Calu3 (cell line): ENCODE measurements at regions of chr11 and their contacts with region 1.

Region 1: DNA sequence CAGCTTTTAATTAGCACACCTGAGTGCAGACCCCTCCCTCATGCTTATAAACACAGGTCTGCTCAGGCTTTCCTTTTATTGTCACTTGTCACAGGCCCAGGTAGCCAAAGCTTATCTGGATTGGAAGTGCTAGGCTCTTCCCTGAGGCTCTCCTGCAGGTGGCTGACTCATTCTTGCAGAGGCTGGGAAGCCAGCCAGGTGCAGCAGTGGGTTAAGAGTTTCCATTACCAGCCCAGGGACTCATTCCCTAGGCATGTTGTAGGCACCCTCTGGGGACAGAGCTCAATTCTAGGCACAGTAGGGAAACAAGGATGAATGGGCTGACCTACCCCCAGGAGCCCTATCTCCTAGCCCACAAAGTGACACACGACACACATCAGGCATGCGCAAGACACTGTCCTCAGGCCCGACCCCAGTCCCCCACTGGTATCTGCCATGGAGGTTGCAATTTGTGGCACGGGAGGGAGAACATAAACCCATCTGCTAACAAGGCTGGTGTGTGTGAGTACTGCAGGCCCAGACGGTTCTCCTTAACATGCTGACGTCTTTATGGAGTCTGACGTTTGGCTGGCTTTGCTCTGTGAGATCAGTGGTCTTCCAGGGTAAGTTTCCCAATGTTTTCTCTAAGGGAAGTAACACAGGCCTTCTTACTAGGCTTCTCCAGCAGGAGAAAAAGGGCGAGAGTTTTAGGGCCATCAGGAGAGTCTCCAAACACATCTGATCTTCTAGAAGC is 94.2 kb downstream of the ABTB2 start:
- DNase-seq: peak; percentile 89
- H3K4me3 Mint-ChIP-seq: peak overlapping the region; percentile 62
- H3K27ac Mint-ChIP-seq: peak overlapping the region; percentile 98
- H3K4me1 Mint-ChIP-seq: peaks cover 65% of the 10 kb centered on the region
- H3K27me3 Mint-ChIP-seq: no peaks in the 10 kb centered on the region
- CTCF ChIP-seq: no peak

Region 2: DNA sequence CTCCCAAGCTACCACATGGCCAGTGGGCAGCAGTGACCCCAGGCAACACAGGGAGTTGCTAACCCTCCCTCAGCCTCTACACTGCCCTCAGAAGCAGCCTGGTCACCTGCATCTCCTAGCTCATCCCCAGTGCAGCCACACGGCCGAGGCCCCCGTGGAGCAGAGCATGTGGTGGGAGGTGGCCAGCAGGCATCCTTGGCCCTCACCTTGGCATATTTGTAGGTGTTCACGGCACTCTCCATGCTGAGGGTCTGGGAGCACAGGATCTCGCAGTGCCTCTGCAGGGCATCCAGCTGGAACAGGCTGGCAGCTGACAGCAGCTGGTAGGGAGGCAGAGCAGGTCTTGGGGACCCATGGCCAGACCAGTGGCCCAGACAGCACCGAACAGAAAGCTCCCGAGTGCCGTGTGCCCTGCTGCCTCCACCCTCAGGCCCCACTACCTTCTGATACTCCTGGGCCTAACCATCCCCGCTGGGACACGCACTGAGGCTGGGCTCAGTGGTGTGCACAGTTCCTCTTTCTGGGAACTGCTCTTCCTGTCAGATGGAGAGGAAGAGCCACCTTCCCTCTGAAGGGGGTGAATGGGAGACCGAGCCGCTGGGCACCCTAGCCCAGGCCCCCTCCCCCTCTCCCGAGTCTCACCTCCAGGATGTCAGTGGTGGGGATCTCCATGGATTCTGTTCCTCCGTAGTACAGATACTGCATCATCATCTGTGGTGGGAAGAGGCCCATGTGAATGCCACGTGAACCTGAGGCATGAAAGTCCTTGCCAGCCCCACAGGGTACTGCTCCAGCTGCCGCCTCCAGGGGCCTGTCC is 109.3 kb before region 1 on chr11:
- CTCF ChIA-PET with region 1: no interaction called
- intact Hi-C with region 1: no loop called
- DNase-seq: no peak
- H3K4me3 Mint-ChIP-seq: no peak overlapping the region
- H3K27ac Mint-ChIP-seq: peak overlapping the region; percentile 38
- H3K4me1 Mint-ChIP-seq: no peaks in the 10 kb centered on the region
- H3K27me3 Mint-ChIP-seq: no peaks in the 10 kb centered on the region
- CTCF ChIP-seq: no peak

Region 3: DNA sequence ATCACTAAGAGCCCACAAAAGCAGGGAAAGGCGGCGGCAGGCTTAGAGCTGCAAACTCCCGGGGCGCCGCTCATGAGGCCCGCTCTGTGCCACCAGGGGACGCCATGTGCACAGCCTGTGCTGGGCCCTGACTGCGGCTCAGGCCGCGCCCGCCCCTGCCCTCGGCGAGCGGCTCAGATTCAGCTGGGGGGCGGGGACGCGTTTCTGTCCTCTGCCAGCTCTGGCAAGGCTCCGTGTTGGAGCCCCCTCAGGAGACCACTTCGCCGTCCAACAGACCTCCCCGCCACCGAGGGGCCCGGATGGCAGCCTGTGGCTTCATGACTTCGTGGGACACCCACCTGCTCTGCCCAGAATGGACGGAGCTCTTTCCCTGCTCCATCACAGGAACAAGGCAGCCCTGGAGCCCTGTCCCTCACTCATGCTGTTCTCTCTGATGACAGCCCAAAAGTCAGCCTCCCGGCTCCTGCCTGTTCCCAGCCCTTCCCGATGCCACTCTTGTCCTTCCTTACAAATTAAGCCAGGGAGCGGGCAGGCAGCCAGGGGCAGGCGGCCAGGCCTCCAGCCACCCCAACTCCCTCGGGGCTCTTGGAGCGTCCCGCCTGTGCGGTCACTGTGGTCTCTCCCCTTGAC is 89.1 kb before region 1 on chr11:
- CTCF ChIA-PET with region 1: interaction called, 16 read pairs
- intact Hi-C with region 1: loop called (anchors 5 kb)
- DNase-seq: peak; percentile 91
- H3K4me3 Mint-ChIP-seq: peak overlapping the region; percentile 69
- H3K27ac Mint-ChIP-seq: peak overlapping the region; percentile 45
- H3K4me1 Mint-ChIP-seq: peaks cover 18% of the 10 kb centered on the region
- H3K27me3 Mint-ChIP-seq: no peaks in the 10 kb centered on the region
- CTCF ChIP-seq: peak; percentile 95

Region 4: DNA sequence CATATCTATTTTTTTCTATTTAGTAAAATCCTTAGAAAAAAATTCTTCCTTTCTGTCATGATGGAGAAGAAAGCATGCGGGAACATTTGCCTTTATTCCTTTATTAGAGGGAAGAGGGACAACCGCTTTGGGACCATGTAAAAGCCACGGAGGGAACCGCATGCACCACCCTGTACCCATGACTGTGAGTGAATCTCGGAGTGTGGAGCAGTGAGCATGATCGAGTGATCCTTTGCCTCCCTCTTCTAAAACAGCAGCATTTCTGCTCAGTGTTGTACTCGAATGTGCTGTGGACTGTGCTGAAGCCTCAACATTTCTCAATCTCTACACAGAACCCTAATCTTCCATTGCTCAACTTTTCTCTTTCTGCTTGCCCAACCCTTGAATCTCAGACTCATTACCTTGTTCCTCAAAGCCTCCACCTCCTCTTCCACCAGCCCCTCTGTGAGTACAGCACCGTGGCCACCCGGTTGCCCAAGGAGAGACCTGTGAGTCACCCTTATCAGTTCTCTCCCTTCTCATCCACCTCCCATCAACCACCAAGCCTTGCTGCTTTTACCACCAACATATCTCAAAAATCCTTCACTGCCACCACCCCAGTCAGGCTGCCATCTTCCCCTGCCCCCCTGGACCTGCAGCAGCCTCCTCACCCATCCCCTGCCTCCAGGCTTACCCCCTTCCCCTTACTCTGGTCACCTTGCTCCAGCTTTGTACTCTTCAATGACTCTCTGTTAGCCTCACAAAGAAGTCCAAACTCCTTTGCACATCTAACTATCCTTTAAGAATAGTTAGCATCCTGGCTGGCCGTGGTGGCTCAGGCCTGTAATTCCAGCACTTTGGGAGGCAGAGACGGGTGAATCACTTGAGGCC is 55.1 kb before region 1 on chr11:
- CTCF ChIA-PET with region 1: interaction called, 4 read pairs
- intact Hi-C with region 1: loop called (anchors 2 kb)
- DNase-seq: peak; percentile 59
- H3K4me3 Mint-ChIP-seq: peak overlapping the region; percentile 1
- H3K27ac Mint-ChIP-seq: peak overlapping the region; percentile 16
- H3K4me1 Mint-ChIP-seq: peaks cover 50% of the 10 kb centered on the region
- H3K27me3 Mint-ChIP-seq: no peaks in the 10 kb centered on the region
- CTCF ChIP-seq: no peak

Region 5: GRCh38 chr11:34234086-34234740 is 29.4 kb before region 1 on chr11:
- CTCF ChIA-PET with region 1: interaction called, 12 read pairs
- intact Hi-C with region 1: loop called (anchors 1 kb)
- DNase-seq: peak; percentile 81
- H3K4me3 Mint-ChIP-seq: peak overlapping the region; percentile 14
- H3K27ac Mint-ChIP-seq: peak overlapping the region; percentile 73
- H3K4me1 Mint-ChIP-seq: peaks cover 30% of the 10 kb centered on the region
- H3K27me3 Mint-ChIP-seq: no peaks in the 10 kb centered on the region
- CTCF ChIP-seq: no peak

Region 6: DNA sequence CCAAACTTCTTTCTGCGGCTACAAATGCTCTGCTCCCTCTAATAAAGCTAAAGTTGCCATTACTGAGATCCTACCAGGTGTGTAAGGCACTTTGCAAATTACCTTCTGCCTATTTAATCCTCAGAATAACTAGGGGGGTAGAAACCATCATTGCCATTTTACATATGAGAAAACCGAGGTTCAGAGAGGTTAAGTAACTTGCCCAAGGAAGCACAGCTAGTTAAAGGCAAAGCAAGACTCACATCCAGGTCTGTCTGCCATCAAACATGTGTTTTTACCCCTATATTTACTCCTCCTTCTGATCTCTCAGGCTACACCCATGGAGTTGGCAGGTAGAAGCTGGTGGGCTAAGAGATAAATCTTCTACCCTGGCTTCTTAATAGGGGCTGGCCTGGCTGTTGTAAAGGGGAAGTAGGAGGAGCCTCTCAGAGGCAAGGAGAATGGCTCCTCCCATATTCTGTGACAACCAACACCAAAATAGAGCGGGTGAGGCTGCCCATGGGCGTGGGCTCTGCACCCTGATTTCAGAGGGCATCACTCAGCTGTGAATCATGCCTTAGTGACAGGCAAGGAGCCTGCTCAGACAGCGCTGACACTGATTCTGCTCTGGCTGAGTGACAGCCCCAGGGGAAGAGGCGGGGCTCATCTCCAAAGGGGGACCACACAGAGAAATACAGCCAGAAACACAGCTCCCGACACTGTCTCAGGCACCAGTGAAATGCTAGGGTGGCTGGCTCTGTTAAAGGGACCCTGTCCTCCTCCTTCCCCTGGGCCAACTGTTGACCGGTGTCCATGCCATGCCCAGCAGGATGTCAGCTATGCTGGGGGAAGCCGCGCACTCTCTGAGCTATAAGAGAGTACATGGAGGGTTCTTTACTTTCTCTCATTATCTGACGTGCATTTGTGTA is 12.6 kb before region 1 on chr11:
- CTCF ChIA-PET with region 1: interaction called, 12 read pairs
- intact Hi-C with region 1: no loop called
- DNase-seq: peak; percentile 62
- H3K4me3 Mint-ChIP-seq: no peak overlapping the region
- H3K27ac Mint-ChIP-seq: no peak overlapping the region
- H3K4me1 Mint-ChIP-seq: peaks cover 25% of the 10 kb centered on the region
- H3K27me3 Mint-ChIP-seq: no peaks in the 10 kb centered on the region
- CTCF ChIP-seq: no peak